ENCODE measurements at regions of chr6 and their contacts with region 1.

Region 1: GRCh38 chr6:53359072-53359842 is 10.5 kb upstream of the ELOVL5 start:
- DNase-seq: peak; percentile 85 to 93 (median 92)
- H3K4me3 ChIP-seq: peak overlapping the region; percentile 50 to 74
- H3K4me3 Mint-ChIP-seq: peak overlapping the region; percentile 81 to 96 (median 91)
- H3K27ac ChIP-seq: peak overlapping the region; percentile 99
- H3K27ac Mint-ChIP-seq: peak overlapping the region; percentile 87 to 100 (median 98)
- H3K4me1 ChIP-seq: peaks cover 53% of the 10 kb centered on the region
- H3K4me1 Mint-ChIP-seq: peaks cover 35 to 61% (median 42%) of the 10 kb centered on the region in 4 donors
- H3K27me3 ChIP-seq: no peaks in the 10 kb centered on the region
- H3K27me3 Mint-ChIP-seq: no peaks in the 10 kb centered on the region

Region 2: DNA sequence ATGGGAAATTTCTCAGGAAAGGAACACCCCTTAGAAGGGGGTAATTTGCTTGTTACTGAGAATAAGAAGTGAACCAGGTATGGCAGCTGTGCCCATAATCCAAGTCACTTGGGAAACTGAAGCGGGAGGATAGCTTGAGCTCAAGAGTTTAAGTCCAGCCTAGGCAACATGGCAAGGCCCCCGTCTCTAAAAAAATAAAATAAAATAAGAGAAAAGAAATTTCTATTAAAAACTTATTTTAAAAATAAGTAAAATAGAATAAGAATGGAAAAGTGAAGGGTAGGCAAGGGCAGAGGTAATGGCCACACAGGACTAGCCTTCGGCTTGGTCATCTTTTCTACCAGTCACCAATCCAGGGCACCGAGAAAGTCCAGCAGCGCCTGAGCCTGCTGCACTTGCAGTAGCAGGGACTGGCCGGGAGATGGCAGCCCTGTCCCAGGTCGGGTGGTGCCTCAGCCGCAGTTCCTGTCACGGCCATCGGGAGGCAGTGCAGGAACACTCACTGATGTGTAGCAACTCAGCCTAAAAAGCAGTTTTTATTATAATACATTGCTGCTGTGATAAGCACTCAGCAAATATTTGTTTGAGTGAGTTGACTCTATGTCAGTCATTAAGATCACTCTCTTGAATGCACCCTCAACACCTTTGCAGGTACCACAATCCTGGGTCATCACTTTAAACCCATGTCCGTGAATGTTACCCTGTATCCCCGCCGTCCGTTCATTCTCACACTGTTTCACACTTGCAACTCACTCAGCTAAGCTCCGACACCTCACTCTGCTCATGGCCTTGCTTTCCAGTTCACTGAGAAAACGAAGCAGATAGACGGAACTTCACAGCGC is 187.4 kb before region 1 on chr6:
- CTCF ChIA-PET with region 1: interaction called, 12 read pairs
- POLR2A ChIA-PET with region 1: no interaction called
- intact Hi-C with region 1: no loop called
- DNase-seq: peak; percentile 83 to 90 (median 85)
- H3K4me3 ChIP-seq: no peak overlapping the region
- H3K4me3 Mint-ChIP-seq: no peak overlapping the region
- H3K27ac ChIP-seq: no peak overlapping the region
- H3K27ac Mint-ChIP-seq: no peak overlapping the region
- H3K4me1 ChIP-seq: no peaks in the 10 kb centered on the region
- H3K4me1 Mint-ChIP-seq: no peaks in the 10 kb centered on the region
- H3K27me3 ChIP-seq: no peaks in the 10 kb centered on the region
- H3K27me3 Mint-ChIP-seq: no peaks in the 10 kb centered on the region

Region 3: DNA sequence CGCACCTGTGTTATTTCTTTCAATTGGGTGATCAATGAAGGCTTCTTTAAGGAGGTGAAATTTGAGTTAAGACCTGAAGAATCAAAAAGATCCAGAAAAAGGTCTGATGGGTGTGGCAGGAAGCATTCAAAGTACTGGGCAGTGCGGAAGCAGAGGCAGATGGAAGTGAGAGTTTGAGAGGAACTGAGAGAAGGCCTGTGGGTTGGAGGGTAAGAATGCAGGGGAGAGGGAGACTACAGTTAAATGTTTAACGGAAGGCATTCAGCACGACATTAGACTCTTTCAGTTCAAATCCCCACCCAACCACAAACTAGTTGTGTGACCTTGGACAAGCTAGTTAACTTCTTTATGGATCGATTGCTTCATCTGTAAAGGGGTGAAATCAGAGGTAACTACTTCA is 160.1 kb before region 1 on chr6:
- CTCF ChIA-PET with region 1: no interaction called
- POLR2A ChIA-PET with region 1: no interaction called
- intact Hi-C with region 1: no loop called
- DNase-seq: no peak
- H3K4me3 ChIP-seq: no peak overlapping the region
- H3K4me3 Mint-ChIP-seq: no peak overlapping the region
- H3K27ac ChIP-seq: no peak overlapping the region
- H3K27ac Mint-ChIP-seq: no peak overlapping the region
- H3K4me1 ChIP-seq: no peaks in the 10 kb centered on the region
- H3K4me1 Mint-ChIP-seq: no peaks in the 10 kb centered on the region
- H3K27me3 ChIP-seq: no peaks in the 10 kb centered on the region
- H3K27me3 Mint-ChIP-seq: no peaks in the 10 kb centered on the region

Region 4: GRCh38 chr6:53309059-53309900 is 50.0 kb before region 1 on chr6:
- CTCF ChIA-PET with region 1: interaction called, 4 read pairs
- POLR2A ChIA-PET with region 1: interaction called, 25 read pairs
- intact Hi-C with region 1: no loop called
- DNase-seq: peak in 2 of 5 donors; percentile 24 to 48
- H3K4me3 ChIP-seq: no peak overlapping the region
- H3K4me3 Mint-ChIP-seq: peak overlapping the region in 7 of 8 donors; percentile 53 to 83 (median 65)
- H3K27ac ChIP-seq: peak overlapping the region; percentile 51
- H3K27ac Mint-ChIP-seq: peak overlapping the region; percentile 79 to 93 (median 85)
- H3K4me1 ChIP-seq: peaks cover 80% of the 10 kb centered on the region
- H3K4me1 Mint-ChIP-seq: peaks cover 72 to 84% (median 79%) of the 10 kb centered on the region in 4 donors
- H3K27me3 ChIP-seq: no peaks in the 10 kb centered on the region
- H3K27me3 Mint-ChIP-seq: no peaks in the 10 kb centered on the region

Region 5: GRCh38 chr6:53326372-53327016 is 32.8 kb before region 1 on chr6:
- CTCF ChIA-PET with region 1: interaction called, 10 read pairs
- POLR2A ChIA-PET with region 1: interaction called, 8 read pairs
- intact Hi-C with region 1: no loop called
- DNase-seq: no peak
- H3K4me3 ChIP-seq: no peak overlapping the region
- H3K4me3 Mint-ChIP-seq: peak overlapping the region in 3 of 8 donors; percentile 23 to 52 (median 40)
- H3K27ac ChIP-seq: no peak overlapping the region
- H3K27ac Mint-ChIP-seq: peak overlapping the region; percentile 37 to 85 (median 75)
- H3K4me1 ChIP-seq: peaks cover 86% of the 10 kb centered on the region
- H3K4me1 Mint-ChIP-seq: peaks cover 63 to 83% (median 72%) of the 10 kb centered on the region in 4 donors
- H3K27me3 ChIP-seq: no peaks in the 10 kb centered on the region
- H3K27me3 Mint-ChIP-seq: no peaks in the 10 kb centered on the region

Region 6: GRCh38 chr6:53335208-53335994 is 23.9 kb before region 1 on chr6:
- CTCF ChIA-PET with region 1: no interaction called
- POLR2A ChIA-PET with region 1: interaction called, 70 read pairs
- intact Hi-C with region 1: loop called (anchors 1 kb)
- DNase-seq: peak; percentile 80 to 92 (median 86)
- H3K4me3 ChIP-seq: peak overlapping the region; percentile 32 to 66
- H3K4me3 Mint-ChIP-seq: peak overlapping the region; percentile 85 to 96 (median 91)
- H3K27ac ChIP-seq: peak overlapping the region; percentile 88
- H3K27ac Mint-ChIP-seq: peak overlapping the region; percentile 95 to 100 (median 99)
- H3K4me1 ChIP-seq: peaks cover 96% of the 10 kb centered on the region
- H3K4me1 Mint-ChIP-seq: peaks cover 80 to 94% (median 87%) of the 10 kb centered on the region in 4 donors
- H3K27me3 ChIP-seq: no peaks in the 10 kb centered on the region
- H3K27me3 Mint-ChIP-seq: no peaks in the 10 kb centered on the region